ENCODE measurements at regions of chr18 and their contacts with region 1.

Region 1: GRCh38 chr18:24601586-24601985 is 141.1 kb downstream of the HRH4 start:
- DNase-seq: no peak
- ATAC-seq: no peak
- H3K4me3 Mint-ChIP-seq: no peak overlapping the region
- H3K27ac Mint-ChIP-seq: no peak overlapping the region
- H3K4me1 Mint-ChIP-seq: peaks cover 23% of the 10 kb centered on the region
- H3K27me3 Mint-ChIP-seq: no peaks in the 10 kb centered on the region
- CTCF ChIP-seq: no peak

Region 2: DNA sequence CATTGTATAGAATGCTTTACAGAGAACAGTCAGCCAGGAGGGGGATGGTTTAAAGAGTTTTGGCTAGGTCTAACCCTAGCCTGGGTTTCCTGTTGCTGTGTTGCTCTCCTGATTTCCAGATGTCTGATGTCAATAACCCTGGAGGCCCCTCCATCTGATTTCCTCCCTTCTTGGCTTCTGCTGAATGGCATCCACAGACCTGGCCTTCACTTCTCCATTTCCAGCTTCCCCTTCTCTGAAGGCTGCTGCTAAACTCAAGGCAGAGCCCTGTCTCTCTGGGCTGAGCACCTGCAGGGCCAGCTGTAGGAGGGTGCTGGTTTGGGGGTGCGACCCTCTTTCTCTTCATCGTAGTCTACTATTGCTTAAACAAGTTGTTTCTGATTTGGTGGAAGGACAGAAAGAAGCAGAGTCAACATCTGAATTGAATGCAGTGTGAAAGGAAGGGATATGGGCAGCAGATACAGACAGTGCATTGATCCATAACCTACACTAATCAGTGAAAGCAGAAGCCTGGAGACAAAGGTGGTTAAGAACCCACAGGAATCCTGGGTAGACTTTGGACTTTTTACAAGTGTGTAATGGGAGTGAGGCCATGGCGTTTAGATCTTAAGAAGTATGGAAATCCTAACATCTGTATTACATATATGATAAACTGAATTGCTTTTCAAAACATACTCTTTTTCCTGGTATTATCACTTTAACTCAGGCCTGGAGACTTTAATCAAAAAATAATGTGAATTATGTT is 12.5 kb after region 1 on chr18:
- CTCF ChIA-PET with region 1: no interaction called
- POLR2A ChIA-PET with region 1: no interaction called
- DNase-seq: no peak
- ATAC-seq: no peak
- H3K4me3 Mint-ChIP-seq: no peak overlapping the region
- H3K27ac Mint-ChIP-seq: no peak overlapping the region
- H3K4me1 Mint-ChIP-seq: peaks cover 25% of the 10 kb centered on the region
- H3K27me3 Mint-ChIP-seq: peaks cover 8% of the 10 kb centered on the region
- CTCF ChIP-seq: no peak

Region 3: DNA sequence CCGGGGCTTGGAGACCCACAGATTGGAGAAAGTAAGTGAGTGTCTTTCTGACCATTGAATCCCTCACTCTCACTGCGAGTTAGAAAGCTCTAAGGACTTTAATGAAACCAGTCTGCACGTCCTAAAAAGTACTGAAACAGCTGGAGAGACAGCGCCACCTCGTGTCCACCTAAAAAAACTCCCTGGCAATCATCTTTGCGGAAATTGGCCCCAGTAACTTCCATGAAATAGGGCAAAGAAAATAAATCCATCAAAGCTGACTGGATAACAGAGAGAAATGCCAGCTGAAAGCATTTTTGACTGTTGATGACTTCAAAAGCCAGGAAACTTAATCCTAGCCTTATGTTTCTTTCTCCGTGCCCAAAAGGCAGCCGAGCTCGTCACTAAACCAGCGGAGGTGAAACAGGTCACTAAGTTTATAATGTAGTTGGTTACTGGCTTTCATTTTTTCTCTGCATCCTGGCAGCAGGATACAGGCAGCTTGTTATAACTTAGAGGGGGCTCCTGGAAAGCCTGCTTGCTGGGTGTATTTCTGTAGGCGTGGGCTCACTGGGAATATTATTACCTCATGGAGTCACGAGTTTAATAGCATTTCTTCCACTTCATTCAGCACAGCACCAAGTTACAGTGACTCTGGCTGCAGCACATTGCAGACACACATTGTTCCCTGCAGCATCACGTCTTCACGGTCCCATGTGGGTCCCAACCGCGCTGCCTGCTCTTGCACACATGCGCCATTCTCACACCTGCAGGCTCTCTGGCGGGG is 125.3 kb after region 1 on chr18:
- CTCF ChIA-PET with region 1: interaction called, 24 read pairs
- POLR2A ChIA-PET with region 1: no interaction called
- DNase-seq: peak; percentile 71
- ATAC-seq: peak; percentile 77
- H3K4me3 Mint-ChIP-seq: no peak overlapping the region
- H3K27ac Mint-ChIP-seq: no peak overlapping the region
- H3K4me1 Mint-ChIP-seq: peaks cover 8% of the 10 kb centered on the region
- H3K27me3 Mint-ChIP-seq: no peaks in the 10 kb centered on the region; the same call in 1 of the 2 replicates
- CTCF ChIP-seq: peak; percentile 77